ENCODE measurements at regions of chr5 and their contacts with region 1.

Region 1: GRCh38 chr5:74766849-74767578 is at the starts of genes GFM2 and NSA2:
- DNase-seq: peak; percentile 89 to 95
- H3K4me3 ChIP-seq: peak within 1 kb of the TSS; percentile 86 to 95
- H3K27ac ChIP-seq: peak within 1 kb of the TSS; percentile 81 to 84
- H3K4me1 ChIP-seq: peaks cover 0 to 31% (median 21%) of the 10 kb centered on the region in 4 donors
- H3K27me3 ChIP-seq: no peaks in the 10 kb centered on the region
- CTCF ChIP-seq: no peak

Region 2: DNA sequence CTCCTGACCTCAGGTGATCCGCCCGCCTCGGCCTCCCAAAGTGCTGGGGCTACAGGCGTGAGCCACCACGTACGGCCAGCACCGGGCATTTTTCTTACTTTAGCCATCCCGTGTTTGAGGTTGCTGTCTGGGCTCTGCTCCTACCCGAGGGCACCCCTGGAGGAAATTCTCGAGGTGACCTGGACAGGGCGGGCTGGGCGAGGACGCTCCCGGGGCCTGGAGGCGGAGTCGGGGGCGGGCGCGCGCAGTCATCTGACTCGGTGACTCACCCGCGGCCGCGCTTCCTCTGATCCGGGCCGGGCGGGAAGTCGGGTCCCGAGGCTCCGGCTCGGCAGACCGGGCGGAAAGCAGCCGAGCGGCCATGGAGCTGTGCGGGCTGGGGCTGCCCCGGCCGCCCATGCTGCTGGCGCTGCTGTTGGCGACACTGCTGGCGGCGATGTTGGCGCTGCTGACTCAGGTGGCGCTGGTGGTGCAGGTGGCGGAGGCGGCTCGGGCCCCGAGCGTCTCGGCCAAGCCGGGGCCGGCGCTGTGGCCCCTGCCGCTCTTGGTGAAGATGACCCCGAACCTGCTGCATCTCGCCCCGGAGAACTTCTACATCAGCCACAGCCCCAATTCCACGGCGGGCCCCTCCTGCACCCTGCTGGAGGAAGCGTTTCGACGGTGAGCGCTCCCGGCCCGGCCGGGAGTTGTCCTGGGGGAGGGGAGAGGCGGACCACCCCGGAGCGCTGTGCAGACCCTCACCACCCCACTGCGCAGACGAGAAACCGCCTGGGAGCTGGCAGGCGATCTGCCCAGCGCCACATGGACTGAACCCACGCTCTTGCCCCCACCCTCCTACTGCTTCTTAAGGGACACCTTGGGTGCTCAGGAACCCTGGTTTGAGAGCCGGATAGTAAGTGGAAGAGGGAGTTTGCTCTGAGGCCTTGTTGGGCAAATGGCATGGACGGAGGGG is 81.8 kb before region 1 on chr5 and contains the start of gene HEXB:
- intact Hi-C with region 1: loop called (anchors 5 kb)
- DNase-seq: peak; percentile 89 to 94
- H3K4me3 ChIP-seq: peak within 1 kb of the TSS; percentile 60 to 66
- H3K27ac ChIP-seq: peak within 1 kb of the TSS; percentile 76 to 83
- H3K4me1 ChIP-seq: peaks cover 0 to 20% (median 17%) of the 10 kb centered on the region in 4 donors
- H3K27me3 ChIP-seq: no peaks in the 10 kb centered on the region
- CTCF ChIP-seq: peak in 1 of 2 experiments; percentile 9

Region 3: GRCh38 chr5:75062925-75063531 is 296.0 kb after region 1 on chr5:
- intact Hi-C with region 1: no loop called
- DNase-seq: no peak
- H3K4me3 ChIP-seq: no peak overlapping the region
- H3K27ac ChIP-seq: no peak overlapping the region
- H3K4me1 ChIP-seq: no peaks in the 10 kb centered on the region
- H3K27me3 ChIP-seq: no peaks in the 10 kb centered on the region
- CTCF ChIP-seq: no peak

Region 4: GRCh38 chr5:75336625-75337339 is 569.8 kb after region 1 on chr5 and contains the start of gene HMGCR:
- intact Hi-C with region 1: loop called (anchors 2 kb)
- DNase-seq: peak; percentile 99
- H3K4me3 ChIP-seq: peak within 1 kb of the TSS; percentile 80 to 91
- H3K27ac ChIP-seq: peak within 1 kb of the TSS; percentile 87 to 88
- H3K4me1 ChIP-seq: peaks cover 0 to 17% (median 6%) of the 10 kb centered on the region in 4 donors
- H3K27me3 ChIP-seq: no peaks in the 10 kb centered on the region
- CTCF ChIP-seq: no peak